OCI-LY7 (cell line): ENCODE measurements at regions of chr21 and their contacts with region 1.

Region 1: DNA sequence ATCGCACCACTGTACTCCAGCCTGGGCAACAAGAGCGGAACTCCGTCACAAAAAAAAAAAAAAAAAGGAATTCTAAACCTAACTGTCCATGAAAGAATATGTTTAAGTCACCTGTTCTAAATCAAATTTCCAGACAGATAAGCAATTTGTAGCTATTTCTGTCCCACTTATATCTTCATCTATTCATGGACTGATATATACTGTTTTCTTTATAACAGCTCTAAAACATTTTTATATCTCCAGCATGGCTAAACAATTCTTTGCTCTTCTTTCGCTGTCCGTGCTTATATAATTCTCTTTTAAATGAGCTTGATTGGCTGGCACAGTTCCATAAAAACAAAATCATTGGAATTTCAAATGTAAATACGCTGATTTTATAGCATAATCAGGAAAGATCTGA is 30.5 kb downstream of the BRWD1 start:
- DNase-seq: no peak
- H3K4me3 ChIP-seq: no peak overlapping the region
- H3K27ac ChIP-seq: no peak overlapping the region
- H3K4me1 ChIP-seq: no peaks in the 10 kb centered on the region
- CTCF ChIP-seq: no peak

Region 2: DNA sequence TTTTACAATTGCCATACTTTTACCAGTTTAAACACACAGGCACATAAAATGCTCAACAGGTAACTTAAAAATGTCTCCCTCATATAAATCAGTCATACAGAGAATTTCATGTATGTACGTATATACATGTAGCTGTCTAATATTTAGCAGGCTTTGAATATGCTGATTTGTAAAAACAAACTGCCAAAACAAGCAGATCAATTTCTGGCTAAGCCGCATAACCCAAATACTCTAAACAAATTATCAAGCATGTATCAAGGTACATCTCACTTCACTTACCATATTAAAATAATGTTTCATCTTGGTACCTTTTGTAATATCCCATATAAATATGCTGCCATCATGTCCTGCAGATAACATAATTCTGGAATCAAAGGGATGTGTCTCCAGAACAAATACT is 13.3 kb before region 1 on chr21:
- CTCF ChIA-PET with region 1: no interaction called
- POLR2A ChIA-PET with region 1: interaction called, 10 read pairs
- intact Hi-C with region 1: no loop called
- DNase-seq: no peak
- H3K4me3 ChIP-seq: no peak overlapping the region
- H3K27ac ChIP-seq: no peak overlapping the region
- H3K4me1 ChIP-seq: no peaks in the 10 kb centered on the region
- CTCF ChIP-seq: no peak

Region 3: GRCh38 chr21:39363607-39364555 is 81.0 kb after region 1 on chr21:
- CTCF ChIA-PET with region 1: no interaction called
- POLR2A ChIA-PET with region 1: no interaction called
- intact Hi-C with region 1: no loop called
- DNase-seq: no peak
- H3K4me3 ChIP-seq: no peak overlapping the region
- H3K27ac ChIP-seq: no peak overlapping the region
- H3K4me1 ChIP-seq: no peaks in the 10 kb centered on the region
- CTCF ChIP-seq: no peak

Region 4: DNA sequence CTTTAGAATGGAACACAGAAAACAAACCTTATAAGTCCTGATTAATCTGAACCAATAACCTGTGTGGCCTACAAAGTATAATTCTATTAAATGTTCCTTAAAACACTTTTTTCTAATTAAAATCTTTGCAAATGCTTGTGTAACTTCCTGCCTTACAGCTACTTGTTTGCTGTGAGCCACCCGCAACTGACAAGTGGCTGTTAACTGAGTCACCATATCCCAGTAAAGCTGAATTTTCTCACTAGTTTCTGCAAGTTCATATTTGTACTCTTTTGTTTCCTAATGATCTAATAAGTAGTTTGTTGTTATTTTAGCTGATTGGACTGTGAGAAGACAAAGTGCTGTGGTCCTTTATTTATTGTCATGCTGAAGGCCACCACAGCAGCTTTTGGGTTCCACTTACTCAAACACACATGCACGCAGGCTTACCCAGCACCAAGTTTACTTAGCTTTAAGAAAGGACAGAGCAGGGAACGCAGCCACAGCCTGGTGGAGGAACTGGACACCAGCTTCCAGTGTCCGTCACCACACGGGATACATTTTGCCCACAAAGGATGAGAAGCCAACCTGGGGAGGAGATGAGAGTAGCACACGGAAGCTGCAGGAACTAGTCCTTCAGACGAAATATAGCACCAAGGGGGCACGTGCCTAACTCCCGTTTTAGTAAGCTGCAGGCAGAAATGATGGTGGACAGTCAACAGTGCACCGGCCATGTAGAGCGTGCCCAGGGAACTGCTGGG is 114.9 kb after region 1 on chr21:
- CTCF ChIA-PET with region 1: no interaction called
- POLR2A ChIA-PET with region 1: no interaction called
- intact Hi-C with region 1: no loop called
- DNase-seq: no peak
- H3K4me3 ChIP-seq: no peak overlapping the region
- H3K27ac ChIP-seq: no peak overlapping the region
- H3K4me1 ChIP-seq: no peaks in the 10 kb centered on the region
- CTCF ChIP-seq: no peak

Region 5: DNA sequence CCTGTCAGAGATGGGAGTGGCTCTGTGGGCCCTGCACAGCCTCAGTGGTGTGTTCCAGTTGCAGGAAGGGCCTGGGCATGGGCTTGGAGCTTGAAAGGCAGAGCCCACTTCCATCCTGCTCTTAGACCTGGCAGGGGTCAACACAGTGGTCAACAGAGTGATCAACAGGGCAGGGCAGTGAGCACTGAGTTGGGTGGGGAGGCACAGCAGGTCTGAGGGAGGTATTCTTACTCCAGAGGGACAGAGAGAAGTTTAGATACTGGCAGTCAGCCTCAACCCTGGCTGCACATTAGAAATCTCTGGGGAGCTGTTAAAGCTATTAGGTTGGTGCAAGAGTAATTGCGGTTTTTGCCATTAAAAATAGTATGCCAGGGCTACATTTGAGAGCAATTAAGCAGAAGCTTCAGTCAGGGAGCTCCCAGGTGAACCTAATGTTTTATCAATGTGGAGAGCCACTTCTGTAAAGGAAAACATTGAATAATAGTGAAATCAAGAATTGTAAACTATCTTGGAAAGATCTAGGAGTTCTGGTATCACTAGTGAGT is 206.5 kb after region 1 on chr21:
- CTCF ChIA-PET with region 1: no interaction called
- POLR2A ChIA-PET with region 1: no interaction called
- intact Hi-C with region 1: no loop called
- DNase-seq: no peak
- H3K4me3 ChIP-seq: no peak overlapping the region
- H3K27ac ChIP-seq: no peak overlapping the region
- H3K4me1 ChIP-seq: no peaks in the 10 kb centered on the region
- CTCF ChIP-seq: no peak